MCF 10A (cell line): ENCODE measurements at regions of chr7 and their contacts with region 1.

Region 1: DNA sequence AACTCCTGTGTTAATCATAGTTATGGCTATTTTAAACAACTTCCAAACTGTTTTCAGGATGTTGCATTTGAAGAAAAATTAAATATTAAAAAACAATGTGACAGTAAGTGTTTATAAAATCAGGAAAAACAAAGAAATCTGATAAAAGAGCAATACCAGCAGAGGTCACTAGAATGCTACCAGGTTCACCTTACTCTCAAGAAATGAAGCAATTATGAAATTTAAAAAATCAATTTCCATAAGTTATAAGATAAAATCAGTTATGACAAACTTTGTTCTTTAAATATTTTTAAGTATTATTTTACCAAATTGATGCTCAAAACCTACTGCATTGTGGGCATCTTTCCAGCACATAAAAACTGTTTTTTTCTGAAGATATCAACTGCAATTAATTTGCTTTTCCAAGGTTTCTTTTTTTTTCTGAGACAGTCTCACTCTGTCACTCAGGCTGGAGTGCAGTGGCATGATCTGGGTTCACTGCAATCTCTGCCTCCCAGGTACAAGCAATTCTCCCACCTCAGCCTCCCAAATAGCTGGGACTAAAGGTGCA is 50.7 kb upstream of the RHEB start:
- DNase-seq: peak; percentile 24
- H3K4me3 Mint-ChIP-seq: no peak overlapping the region
- H3K27ac Mint-ChIP-seq: no peak overlapping the region
- H3K4me1 Mint-ChIP-seq: no peaks in the 10 kb centered on the region
- H3K27me3 Mint-ChIP-seq: no peaks in the 10 kb centered on the region
- CTCF ChIP-seq: peak; percentile 52

Region 2: GRCh38 chr7:151705636-151706276 is 135.3 kb after region 1 on chr7:
- CTCF ChIA-PET with region 1: interaction called, 4 read pairs
- POLR2A ChIA-PET with region 1: interaction called, 3 read pairs
- intact Hi-C with region 1: loop called (anchors 1 kb)
- DNase-seq: peak; percentile 74
- H3K4me3 Mint-ChIP-seq: no peak overlapping the region
- H3K27ac Mint-ChIP-seq: peak overlapping the region; percentile 57
- H3K4me1 Mint-ChIP-seq: peaks cover 17% of the 10 kb centered on the region
- H3K27me3 Mint-ChIP-seq: no peaks in the 10 kb centered on the region
- CTCF ChIP-seq: peak; percentile 37